Endothelial cell of umbilical vein (primary cell): ENCODE measurements at regions of chr12 and their contacts with region 1.

Region 1: DNA sequence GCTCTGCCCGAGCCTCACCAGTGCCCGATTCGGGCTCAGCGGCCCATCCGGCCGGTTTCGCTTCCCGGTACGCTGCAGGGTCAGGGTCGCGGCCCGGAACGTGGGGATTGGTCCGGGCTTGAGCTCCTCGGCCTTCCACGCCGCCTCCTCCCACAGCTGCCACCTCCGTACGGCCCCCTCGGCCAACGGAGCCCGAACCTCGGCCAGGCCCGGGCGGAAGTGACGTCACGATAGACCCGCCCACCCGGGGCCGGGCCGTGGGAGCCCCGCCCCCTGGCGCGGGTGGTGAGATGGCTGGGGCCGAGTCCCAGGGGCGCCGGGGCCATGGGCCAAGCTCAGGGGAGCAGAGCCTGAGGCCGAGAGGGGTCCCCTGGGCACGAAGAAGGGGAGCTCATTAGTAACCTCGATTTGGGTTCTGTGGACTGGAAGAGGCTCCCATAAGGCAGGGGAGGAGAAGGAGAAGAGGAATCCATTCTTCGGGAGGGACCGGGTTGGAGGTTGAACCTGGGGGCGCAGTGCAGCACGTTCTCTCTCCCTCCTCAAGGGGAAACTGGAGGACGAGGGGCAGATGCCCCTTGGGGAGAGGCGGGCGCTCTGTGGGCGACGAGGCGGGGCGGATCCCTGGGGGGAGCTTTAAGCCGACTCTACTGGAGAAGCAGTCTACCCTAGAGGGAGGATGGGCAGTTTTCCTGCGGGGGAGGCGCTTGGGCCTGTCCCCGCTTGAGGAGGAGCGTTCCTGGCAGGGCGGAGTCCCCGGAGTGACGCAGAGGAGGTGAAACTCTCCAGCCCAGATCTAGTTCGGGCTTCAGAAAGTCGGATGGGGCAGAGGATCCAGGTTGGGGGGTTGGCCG is at the start of gene MLF2:
- DNase-seq: peak; percentile 99
- H3K4me3 ChIP-seq: peak within 1 kb of the TSS; percentile 52 to 76 (median 72)
- H3K27ac ChIP-seq: peak within 1 kb of the TSS; percentile 98
- H3K4me1 ChIP-seq: peaks cover 10% of the 10 kb centered on the region
- H3K27me3 ChIP-seq: no peaks in the 10 kb centered on the region
- CTCF ChIP-seq: peak in 1 of 2 donors; percentile 98
- POLR2A ChIP-seq: peak; percentile 62
- total RNA-seq, gene MLF2: 136 and 147 TPM in 2 replicates

Region 2: GRCh38 chr12:5685966-5686365 is 1067.2 kb before region 1 on chr12:
- CTCF ChIA-PET with region 1: no interaction called
- POLR2A ChIA-PET with region 1: no interaction called
- dilution Hi-C with region 1: no loop called
- intact Hi-C with region 1: no loop called
- DNase-seq: no peak
- H3K4me3 ChIP-seq: no peak overlapping the region
- H3K27ac ChIP-seq: no peak overlapping the region
- H3K4me1 ChIP-seq: no peaks in the 10 kb centered on the region
- H3K27me3 ChIP-seq: no peaks in the 10 kb centered on the region
- CTCF ChIP-seq: no peak
- POLR2A ChIP-seq: no peak

Region 3: GRCh38 chr12:6735448-6736191 is 17.5 kb before region 1 on chr12:
- CTCF ChIA-PET with region 1: interaction called, 13 read pairs
- POLR2A ChIA-PET with region 1: no interaction called
- dilution Hi-C with region 1: no loop called
- intact Hi-C with region 1: loop called (anchors 1 kb)
- DNase-seq: peak; percentile 63
- H3K4me3 ChIP-seq: no peak overlapping the region
- H3K27ac ChIP-seq: no peak overlapping the region
- H3K4me1 ChIP-seq: no peaks in the 10 kb centered on the region
- H3K27me3 ChIP-seq: no peaks in the 10 kb centered on the region
- CTCF ChIP-seq: peak; percentile 71 to 72
- POLR2A ChIP-seq: no peak

Region 4: DNA sequence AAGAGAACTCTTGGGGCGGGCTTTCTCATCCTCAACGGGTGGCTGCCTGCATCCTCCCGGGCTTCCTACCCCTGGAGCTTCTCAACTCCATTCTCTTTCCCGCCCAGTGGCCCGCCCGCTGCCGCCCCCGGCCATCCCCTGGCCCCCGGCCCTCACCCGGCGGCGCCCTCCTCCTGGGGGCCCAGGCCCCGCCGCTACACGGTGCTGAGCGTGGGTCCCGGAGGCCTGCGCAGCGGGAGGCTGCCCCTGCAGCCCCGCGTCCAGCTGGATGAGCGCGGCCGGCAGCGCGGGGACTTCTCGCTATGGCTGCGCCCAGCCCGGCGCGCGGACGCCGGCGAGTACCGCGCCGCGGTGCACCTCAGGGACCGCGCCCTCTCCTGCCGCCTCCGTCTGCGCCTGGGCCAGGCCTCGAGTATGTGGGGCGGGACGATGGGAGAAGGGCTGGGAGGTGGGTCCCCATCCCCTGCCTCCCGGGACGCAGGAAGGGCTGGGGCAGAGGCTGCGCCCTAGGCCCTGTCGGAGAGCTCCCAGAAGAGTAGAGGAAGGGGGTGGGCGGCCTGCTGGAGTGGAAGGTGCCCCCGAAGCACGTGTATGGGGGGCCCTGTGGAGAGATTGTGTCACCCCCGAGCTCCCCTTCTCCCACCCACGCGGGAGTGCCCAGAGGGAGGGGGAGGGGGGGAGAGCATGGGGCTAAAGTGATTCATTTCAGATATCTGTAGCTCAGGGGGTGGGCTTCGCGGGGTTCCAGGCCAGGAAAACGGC is 20.6 kb after region 1 on chr12:
- CTCF ChIA-PET with region 1: interaction called, 234 read pairs
- POLR2A ChIA-PET with region 1: interaction called, 4 read pairs
- dilution Hi-C with region 1: no loop called
- intact Hi-C with region 1: no loop called
- DNase-seq: no peak
- H3K4me3 ChIP-seq: no peak overlapping the region
- H3K27ac ChIP-seq: no peak overlapping the region
- H3K4me1 ChIP-seq: peaks cover 10% of the 10 kb centered on the region
- H3K27me3 ChIP-seq: no peaks in the 10 kb centered on the region
- CTCF ChIP-seq: no peak
- POLR2A ChIP-seq: no peak

Region 5: DNA sequence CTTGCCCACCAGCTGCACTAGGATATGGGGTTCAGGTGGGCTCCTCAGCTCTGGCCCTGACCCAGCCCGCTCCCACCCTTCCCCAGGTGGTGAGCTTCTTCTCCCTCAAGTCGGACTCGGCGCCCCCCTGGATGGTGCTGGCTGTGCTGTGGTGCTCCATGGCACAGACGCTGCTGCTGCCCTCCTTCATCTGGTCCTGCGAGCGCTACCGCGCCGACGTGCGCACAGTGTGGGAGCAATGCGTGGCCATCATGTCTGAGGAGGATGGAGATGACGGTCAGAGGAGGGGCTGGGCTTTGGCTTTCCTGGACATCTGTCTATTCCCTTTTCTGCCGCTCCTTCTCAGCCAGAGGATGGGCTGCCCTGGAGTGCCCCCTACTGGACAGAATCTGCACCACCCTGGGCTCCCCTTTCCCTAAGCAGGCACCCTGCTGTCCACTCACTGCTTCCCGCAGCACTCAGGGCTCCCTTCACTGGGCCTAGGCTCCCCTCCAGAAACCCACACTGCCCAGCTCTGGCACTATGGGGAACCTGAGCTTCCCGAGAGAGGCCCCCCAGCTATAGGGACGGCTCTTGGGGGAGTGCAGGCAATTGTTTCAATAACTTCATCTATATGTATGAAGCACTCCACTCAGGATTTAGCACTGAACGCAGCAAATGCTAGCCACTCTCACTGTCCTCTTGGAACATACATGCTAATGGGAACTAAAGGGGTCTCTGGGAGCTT is 72.4 kb after region 1 on chr12:
- CTCF ChIA-PET with region 1: interaction called, 148 read pairs
- POLR2A ChIA-PET with region 1: interaction called, 5 read pairs
- dilution Hi-C with region 1: no loop called
- intact Hi-C with region 1: loop called (anchors 1 kb)
- DNase-seq: peak; percentile 87
- H3K4me3 ChIP-seq: no peak overlapping the region
- H3K27ac ChIP-seq: no peak overlapping the region
- H3K4me1 ChIP-seq: peaks cover 23% of the 10 kb centered on the region
- H3K27me3 ChIP-seq: peaks cover 3% of the 10 kb centered on the region in 2 experiments
- CTCF ChIP-seq: peak; percentile 95
- POLR2A ChIP-seq: no peak

Region 6: DNA sequence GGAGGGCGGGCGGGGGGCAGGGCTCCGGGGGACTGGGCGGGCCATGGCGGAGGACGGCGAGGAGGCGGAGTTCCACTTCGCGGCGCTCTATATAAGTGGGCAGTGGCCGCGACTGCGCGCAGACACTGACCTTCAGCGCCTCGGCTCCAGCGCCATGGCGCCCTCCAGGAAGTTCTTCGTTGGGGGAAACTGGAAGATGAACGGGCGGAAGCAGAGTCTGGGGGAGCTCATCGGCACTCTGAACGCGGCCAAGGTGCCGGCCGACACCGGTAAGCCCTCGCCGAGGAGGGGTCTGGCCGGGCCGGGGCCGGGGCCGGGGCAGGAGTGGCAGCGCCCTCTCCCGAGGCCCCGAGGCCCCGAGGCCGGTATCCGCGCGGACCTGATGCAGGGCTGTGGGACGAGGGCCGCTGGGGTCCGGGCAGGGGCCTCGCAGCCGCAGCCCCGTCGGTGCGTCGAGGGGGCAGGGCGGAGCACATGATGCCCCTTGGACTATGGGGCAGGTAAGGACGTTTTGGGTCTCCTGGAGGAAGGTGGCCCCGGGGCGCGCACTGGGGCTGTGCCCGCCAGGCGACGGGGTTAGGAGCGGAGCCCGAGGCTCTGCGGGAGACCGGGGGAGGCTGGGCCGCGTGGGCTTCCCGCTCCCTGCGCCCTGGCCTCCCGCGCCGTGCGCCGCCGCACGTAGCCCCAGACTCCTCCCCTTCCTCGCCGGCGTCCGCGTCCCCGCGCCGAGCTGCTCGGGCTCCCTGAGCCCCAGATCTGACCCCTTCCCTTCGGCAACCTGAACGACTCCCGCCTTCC is 114.5 kb after region 1 on chr12 and contains the start of gene TPI1:
- CTCF ChIA-PET with region 1: interaction called, 14 read pairs
- POLR2A ChIA-PET with region 1: interaction called, 5 read pairs
- dilution Hi-C with region 1: no loop called
- intact Hi-C with region 1: loop called (anchors 1 kb)
- DNase-seq: peak; percentile 78
- H3K4me3 ChIP-seq: peak within 1 kb of the TSS; percentile 60 to 95 (median 75)
- H3K27ac ChIP-seq: peak within 1 kb of the TSS; percentile 43
- H3K4me1 ChIP-seq: peaks cover 32% of the 10 kb centered on the region
- H3K27me3 ChIP-seq: no peaks in the 10 kb centered on the region
- CTCF ChIP-seq: no peak
- POLR2A ChIP-seq: peak; percentile 98
- total RNA-seq, gene TPI1: 643 and 676 TPM in 2 replicates

Region 7: DNA sequence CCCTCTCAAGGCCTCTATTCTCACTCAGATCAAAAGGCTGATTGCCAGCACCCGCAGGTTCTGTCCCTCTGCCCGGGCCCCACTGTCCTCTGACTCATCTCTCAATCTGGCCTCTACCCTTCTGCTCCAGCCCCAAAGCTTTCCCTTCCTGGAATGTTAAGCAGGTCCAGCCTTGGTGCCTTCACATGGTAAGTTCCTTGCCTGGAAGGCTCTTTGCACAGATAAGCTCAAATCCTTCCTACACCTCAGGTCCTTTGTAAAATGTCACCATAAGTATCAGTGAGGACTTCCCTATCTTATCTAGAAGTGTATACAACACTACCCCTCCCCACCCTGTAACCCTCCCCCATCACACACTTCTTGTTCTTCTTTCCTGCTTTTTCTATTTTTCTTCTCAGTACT is 242.9 kb after region 1 on chr12:
- CTCF ChIA-PET with region 1: no interaction called
- POLR2A ChIA-PET with region 1: no interaction called
- dilution Hi-C with region 1: no loop called
- intact Hi-C with region 1: no loop called
- DNase-seq: no peak
- H3K4me3 ChIP-seq: no peak overlapping the region
- H3K27ac ChIP-seq: no peak overlapping the region
- H3K4me1 ChIP-seq: no peaks in the 10 kb centered on the region
- H3K27me3 ChIP-seq: no peaks in the 10 kb centered on the region
- CTCF ChIP-seq: no peak
- POLR2A ChIP-seq: no peak